Cardiac septum (tissue), 1 donor: ENCODE measurements at regions of chr1 and their contacts with region 1.

Region 1: GRCh38 chr1:56409094-56409691 is 170.2 kb downstream of the PLPP3 start:
- DNase-seq: no peak

Region 2: DNA sequence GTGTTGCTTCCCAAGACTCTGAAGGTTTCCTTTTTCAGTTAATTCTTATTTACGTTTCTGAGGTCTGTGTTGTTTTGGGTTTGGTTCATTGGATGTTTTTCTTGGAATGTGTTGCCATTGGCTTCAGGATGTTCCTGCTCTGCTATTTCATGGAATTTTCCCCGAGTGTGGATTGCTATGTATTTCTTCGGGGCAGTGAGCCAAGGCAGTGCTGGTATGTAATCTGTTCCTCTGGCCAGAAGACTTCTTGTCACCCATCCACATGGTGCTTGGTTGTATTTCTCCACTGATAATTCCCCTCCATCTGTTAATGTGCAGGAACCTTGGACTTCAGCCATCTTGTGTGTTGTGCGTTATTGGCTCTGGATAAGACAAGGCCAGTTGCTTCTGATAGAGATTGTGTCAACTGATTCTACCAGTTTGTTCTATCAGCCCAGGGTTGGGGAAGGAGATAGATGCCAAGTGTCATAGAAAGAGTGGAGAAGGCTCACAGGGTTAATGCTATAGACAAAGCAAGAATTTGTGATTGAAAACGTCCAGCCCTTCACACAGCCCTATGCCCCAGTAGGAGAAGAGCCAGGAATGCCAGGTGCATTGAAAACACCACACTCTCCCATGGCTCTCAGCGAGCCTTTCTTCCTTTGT is 335.1 kb before region 1 on chr1:
- intact Hi-C with region 1: loop called (anchors 10 kb)
- DNase-seq: no peak

Region 3: GRCh38 chr1:56189946-56190792 is 219.0 kb before region 1 on chr1:
- intact Hi-C with region 1: loop called (anchors 5 kb)
- DNase-seq: no peak

Region 4: GRCh38 chr1:56291374-56291919 is 117.7 kb before region 1 on chr1:
- intact Hi-C with region 1: loop called (anchors 10 kb)
- DNase-seq: peak; percentile 83